Sigmoid colon (tissue), 7 donors: ENCODE measurements at regions of chr20 and their contacts with region 1.

Region 1: GRCh38 chr20:45971675-45972499 is at the start of gene ZNF335:
- DNase-seq: peak; percentile 98
- H3K4me3 ChIP-seq: peak within 1 kb of the TSS; percentile 65 to 92 (median 77)
- H3K27ac ChIP-seq: peak within 1 kb of the TSS; percentile 92 to 99 (median 98)
- H3K4me1 ChIP-seq: peaks cover 0 to 36% (median 25%) of the 10 kb centered on the region in 4 donors
- H3K27me3 ChIP-seq: no peaks in the 10 kb centered on the region
- CTCF ChIP-seq: peak; percentile 18 to 51 (median 38)
- EP300 ChIP-seq: peak in 1 of 4 donors; percentile 61
- POLR2A ChIP-seq: peak; percentile 49 to 62
- total RNA-seq, gene ZNF335: 12.0 to 24.4 (median 14.9) TPM

Region 2: GRCh38 chr20:45833030-45833882 is 138.6 kb before region 1 on chr20 and contains the start of gene SNX21:
- intact Hi-C with region 1: loop called (anchors 5 kb)
- DNase-seq: peak; percentile 97
- H3K4me3 ChIP-seq: peak within 1 kb of the TSS; percentile 65 to 78 (median 73)
- H3K27ac ChIP-seq: peak within 1 kb of the TSS; percentile 91 to 97 (median 94)
- H3K4me1 ChIP-seq: peaks cover 0 to 46% (median 39%) of the 10 kb centered on the region in 4 donors
- H3K27me3 ChIP-seq: no peaks in the 10 kb centered on the region
- CTCF ChIP-seq: no peak
- EP300 ChIP-seq: peak in 2 of 4 donors; percentile 15
- POLR2A ChIP-seq: peak in 1 of 2 donors; percentile 14
- total RNA-seq, gene SNX21: 46.7 to 82.5 (median 52.2) TPM